GM18951 (cell line): ENCODE measurements at regions of chr7 and their contacts with region 1.

Region 1: DNA sequence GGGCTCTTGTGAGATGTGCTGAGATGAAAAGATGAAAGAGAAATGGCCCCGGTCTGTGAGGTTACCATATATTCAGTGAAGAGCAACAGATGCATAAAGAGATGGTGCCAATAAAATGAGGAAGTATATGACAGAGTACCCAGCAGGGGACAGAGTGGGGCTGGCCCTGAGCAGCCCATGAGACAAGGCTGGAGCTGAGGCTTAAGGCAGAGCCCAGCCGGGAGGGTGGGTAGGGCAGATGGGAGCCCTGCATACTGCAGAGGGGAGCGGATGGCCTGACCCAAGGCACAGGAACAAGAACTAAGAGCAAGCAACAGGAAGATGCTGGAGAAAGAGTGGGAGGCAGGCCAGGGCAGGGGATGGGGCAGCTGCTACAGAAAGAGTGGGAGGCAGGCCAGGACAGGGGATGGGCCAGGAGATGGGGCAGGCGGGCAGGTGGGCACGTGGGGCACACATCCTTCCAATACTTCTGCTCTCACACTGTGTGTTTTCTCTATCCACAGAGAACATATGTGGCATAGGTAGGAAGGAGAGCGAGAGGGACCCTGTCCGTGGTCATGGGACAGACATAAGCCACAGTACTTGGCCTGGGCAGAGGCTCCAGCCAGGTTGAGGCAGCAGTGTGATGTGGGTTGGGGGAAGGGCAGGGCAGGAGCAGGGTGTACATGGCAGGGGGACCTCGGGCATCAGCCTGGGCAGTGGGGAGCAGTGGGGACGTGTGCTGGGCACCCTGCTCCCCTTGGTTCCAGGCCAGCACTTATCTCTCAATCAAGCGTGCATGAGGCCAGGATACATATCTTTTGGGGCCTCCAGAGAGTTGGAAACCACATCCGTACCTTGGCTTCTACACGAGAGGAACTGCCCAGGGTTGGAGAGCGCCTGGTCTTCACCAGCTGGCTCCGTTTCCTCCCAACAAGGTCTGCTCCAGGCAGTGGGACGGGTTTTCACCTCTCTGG is 91.6 kb upstream of the IKZF1 start:
- POLR2A ChIP-seq: no peak

Region 2: DNA sequence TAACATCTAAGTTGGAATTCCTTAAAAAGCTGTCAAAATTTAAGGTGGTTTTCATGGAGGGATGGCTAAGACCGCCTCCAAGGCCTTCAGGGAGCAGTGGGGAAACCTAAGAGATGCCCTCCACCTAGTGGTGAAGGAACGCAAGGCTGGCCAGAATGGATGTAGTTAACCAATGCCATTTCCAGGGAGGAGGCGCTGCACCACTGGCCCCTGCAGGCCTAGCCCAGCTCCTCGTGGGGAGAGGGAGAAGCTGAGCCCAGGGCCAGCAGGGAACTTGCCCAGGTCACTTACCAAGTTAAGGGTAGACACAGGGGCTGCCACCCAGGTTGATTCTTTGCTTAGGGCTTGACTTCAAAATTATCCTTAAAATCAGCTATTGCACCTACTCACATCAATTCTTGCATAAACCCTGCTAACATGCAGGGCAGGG is 205.2 kb after region 1 on chr7:
- in situ Hi-C with region 1: loop called (anchors 25 kb)
- POLR2A ChIP-seq: no peak